ENCODE measurements at regions of chr12 and their contacts with region 1.

Region 1: DNA sequence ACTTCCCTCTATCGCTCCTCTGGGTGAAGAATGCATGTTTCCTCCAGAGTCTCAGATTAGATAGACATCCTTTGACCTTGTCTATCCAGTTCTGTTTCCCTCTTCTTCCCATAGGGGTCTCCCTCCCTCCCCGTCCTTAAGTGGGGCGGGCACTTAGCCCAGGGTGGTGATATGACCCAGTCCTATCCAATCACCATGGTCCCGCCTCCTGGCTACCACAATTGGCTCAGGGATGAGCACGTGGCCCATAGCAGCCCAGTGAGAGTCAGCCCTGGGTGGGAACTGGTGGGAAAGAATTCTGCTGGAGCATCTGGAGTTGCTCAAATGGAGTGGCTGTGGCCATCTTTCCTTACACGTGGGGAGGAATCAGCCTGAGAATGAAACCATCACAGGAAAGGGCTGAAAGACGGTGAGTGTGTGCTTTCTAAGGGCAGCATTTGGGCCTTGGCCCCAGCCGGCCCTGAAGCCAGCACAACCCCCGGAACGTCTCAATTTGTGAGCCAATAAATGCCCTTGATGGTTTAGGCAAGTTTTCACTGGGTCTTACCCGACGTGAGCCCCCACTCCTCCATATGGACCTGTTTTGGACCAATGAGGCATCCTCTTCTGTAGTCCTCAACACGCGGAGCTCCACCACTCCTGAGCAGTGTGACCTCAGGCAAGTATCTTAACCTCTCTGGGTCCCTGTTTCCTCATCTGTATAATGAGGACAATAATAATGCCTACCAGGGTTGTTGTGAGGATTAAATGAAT is 14.4 kb upstream of the MLXIP start:
- DNase-seq: peak; percentile 94
- ATAC-seq: peak; percentile 96
- H3K4me3 Mint-ChIP-seq: peak overlapping the region; percentile 73
- H3K27ac Mint-ChIP-seq: peak overlapping the region; percentile 95
- H3K4me1 Mint-ChIP-seq: peaks cover 35% of the 10 kb centered on the region
- H3K27me3 Mint-ChIP-seq: no peaks in the 10 kb centered on the region
- CTCF ChIP-seq: no peak

Region 2: DNA sequence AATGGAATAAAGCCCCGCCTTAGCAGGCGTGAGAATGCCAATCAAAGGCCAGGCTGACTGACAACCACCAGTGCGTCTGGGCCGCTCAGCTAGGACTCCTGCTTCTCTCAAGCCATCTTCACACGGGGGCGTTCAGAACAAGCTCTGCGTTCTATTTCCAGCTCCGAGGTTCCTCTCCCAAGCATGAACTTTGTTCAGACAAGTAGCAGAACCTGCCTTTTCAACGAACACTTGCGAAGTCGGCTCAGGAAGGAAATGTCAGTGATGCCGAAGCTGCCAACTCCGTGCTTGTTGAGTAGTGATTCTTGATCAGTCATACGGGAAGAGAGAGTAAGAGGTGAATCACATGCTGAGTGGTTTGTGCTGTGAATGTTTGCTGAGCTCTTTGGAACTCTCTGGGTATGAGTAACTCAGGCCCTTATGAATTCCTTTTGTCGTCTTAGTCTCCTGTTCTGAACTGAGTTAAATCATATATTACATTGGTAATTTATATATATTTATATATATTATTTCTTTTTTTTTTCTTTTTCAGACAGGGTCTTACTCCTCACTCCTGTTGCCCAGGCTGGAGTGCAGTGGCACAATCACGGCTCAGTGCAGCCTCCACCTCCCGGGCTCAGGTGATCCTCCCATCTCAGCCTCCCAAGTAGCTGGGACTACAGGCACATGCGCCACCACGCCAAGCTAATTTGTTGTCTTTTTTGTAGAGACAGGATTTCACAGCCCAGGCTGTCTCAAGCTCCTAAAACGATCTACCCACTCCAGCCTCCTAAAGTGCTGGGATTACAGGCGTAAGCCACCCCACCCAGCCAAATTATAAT is 71.9 kb before region 1 on chr12:
- CTCF ChIA-PET with region 1: no interaction called
- POLR2A ChIA-PET with region 1: no interaction called
- DNase-seq: no peak
- ATAC-seq: no peak
- H3K4me3 Mint-ChIP-seq: no peak overlapping the region
- H3K27ac Mint-ChIP-seq: no peak overlapping the region
- H3K4me1 Mint-ChIP-seq: no peaks in the 10 kb centered on the region
- H3K27me3 Mint-ChIP-seq: no peaks in the 10 kb centered on the region
- CTCF ChIP-seq: no peak

Region 3: DNA sequence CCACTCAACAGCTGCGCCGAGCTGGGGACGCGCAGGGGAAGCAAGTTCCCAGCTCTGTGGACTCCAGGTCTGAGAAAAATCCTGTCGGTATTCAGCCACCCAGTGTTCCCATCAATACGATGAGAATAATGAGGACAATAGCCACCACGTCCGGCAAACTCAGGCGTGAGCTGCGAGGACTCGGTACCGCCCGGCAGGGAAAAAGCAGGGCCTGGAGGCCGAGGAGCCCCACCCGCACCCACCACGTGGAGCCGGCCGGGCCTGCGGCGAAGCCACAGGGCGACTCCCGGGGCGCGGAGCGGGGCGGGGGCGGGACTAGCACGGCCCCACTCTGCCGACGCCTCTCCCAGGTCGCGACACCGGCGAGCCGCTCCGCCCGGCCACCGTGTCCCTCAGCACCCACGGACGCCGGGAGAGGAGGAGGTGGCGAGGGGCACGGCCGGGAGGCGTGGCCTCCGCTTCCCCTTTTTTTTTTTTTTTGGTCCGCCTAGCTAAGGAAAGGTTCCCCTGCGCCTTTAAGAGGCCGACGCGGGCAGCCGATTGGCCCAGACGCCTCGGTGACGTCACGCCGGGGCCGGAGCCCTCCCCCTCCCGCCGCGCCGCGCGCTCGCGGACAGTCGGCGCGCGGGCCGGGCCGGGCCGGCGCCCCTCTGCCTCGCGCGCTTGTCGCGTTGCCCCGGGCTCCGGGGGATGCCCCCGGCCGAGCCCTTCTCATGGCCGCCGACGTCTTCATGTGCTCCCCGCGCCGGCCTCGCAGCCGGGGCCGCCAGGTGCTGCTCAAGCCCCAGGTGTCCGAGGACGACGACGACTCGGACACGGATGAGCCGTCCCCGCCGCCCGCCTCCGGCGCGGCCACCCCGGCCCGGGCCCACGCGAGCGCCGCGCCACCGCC is 14.2 kb after region 1 on chr12 and contains the start of gene MLXIP:
- CTCF ChIA-PET with region 1: interaction called, 10 read pairs
- POLR2A ChIA-PET with region 1: interaction called, 8 read pairs
- DNase-seq: peak; percentile 91
- ATAC-seq: peak; percentile 74
- H3K4me3 Mint-ChIP-seq: peak within 1 kb of the TSS; percentile 87
- H3K27ac Mint-ChIP-seq: no peak within 1 kb of the TSS
- H3K4me1 Mint-ChIP-seq: peaks cover 31% of the 10 kb centered on the region
- H3K27me3 Mint-ChIP-seq: peaks cover 8% of the 10 kb centered on the region
- CTCF ChIP-seq: no peak
- total RNA-seq, gene MLXIP: 40.5 to 49.4 TPM (median 44.4 TPM) in 3 replicates